Activated naive CD4-positive, alpha-beta T cell treated with anti-CD3 and anti-CD28 coated beads for 36 hours (primary cell): ENCODE measurements at regions of chr17 and their contacts with region 1.

Region 1: GRCh38 chr17:63621766-63622519 is at the start of gene MAP3K3:
- DNase-seq: peak; percentile 99
- H3K4me3 Mint-ChIP-seq: peak within 1 kb of the TSS; percentile 97
- H3K27ac Mint-ChIP-seq: peak within 1 kb of the TSS; percentile 82
- H3K4me1 Mint-ChIP-seq: peaks cover 35% of the 10 kb centered on the region
- H3K27me3 Mint-ChIP-seq: no peaks in the 10 kb centered on the region
- total RNA-seq, gene MAP3K3: 28.8 to 29.6 TPM

Region 2: DNA sequence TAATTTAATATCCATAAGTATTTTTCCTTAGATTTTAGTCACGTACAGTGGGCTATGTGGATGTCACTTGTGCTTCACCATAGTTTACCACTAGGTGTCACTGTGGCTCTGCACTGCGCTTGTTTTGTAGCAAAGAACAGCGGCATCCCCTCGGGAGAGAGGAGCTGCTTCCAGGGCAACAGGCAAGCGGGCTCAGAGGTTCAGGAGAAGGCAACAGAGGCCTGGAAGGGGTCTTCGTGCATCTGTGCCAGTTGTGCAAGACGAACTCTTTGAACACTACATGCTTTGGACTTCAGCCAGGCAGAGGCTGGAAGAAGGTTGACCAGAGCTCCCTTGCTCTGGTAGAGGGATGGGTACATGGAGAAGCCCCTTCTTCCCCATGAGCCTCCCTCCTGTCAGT is 196.5 kb before region 1 on chr17:
- CTCF ChIA-PET with region 1: interaction called, 16 read pairs
- intact Hi-C with region 1: no loop called
- DNase-seq: peak; percentile 85
- H3K4me3 Mint-ChIP-seq: no peak overlapping the region
- H3K27ac Mint-ChIP-seq: no peak overlapping the region
- H3K4me1 Mint-ChIP-seq: peaks cover 21% of the 10 kb centered on the region
- H3K27me3 Mint-ChIP-seq: no peaks in the 10 kb centered on the region

Region 3: DNA sequence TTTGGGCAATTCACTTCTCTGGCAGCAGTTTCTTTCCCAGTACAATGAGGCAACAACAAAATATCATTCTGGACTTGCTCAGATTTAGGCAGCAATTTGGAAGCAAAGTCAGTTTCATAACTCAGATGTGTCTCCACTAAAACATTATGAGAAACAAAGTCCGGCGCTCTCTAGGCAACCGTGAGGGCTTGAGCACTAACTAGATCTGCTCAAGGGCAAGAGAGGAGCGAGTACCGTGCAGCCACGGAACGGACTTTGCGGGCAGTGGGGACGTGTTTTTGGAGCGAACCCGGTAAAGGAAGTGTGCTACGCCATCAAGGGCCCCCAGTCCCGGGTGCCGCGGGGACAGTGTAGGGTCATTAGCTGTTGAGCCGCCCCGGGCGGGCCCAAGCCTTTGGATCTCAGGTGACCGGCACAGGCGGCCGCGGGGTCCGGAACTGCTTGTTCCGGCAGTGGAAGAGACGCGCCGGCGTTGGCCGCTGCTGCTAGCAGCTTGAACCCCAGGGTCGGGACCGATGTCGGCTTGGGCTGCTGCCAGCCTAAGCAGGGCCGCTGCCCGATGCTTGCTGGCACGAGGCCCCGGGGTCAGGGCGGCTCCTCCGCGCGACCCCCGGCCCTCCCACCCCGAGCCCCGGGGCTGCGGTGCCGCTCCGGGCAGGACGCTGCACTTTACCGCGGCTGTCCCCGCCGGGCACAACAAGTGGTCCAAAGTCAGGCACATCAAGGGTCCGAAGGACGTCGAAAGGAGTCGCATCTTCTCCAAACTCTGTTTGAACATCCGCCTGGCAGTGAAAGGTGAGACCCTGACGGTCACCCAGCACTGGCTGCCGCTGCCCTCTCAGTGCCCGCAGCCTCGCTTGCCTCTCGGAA is 21.1 kb before region 1 on chr17 and contains the start of gene TACO1:
- CTCF ChIA-PET with region 1: interaction called, 4 read pairs
- intact Hi-C with region 1: loop called (anchors 1 kb)
- DNase-seq: peak; percentile 88
- H3K4me3 Mint-ChIP-seq: peak within 1 kb of the TSS; percentile 97
- H3K27ac Mint-ChIP-seq: peak within 1 kb of the TSS; percentile 84
- H3K4me1 Mint-ChIP-seq: peaks cover 29% of the 10 kb centered on the region
- H3K27me3 Mint-ChIP-seq: no peaks in the 10 kb centered on the region
- total RNA-seq, gene TACO1: 27.6 to 28.9 TPM

Region 4: GRCh38 chr17:63741221-63742049 is 119.5 kb after region 1 on chr17 and contains the start of gene STRADA:
- CTCF ChIA-PET with region 1: no interaction called
- intact Hi-C with region 1: loop called (anchors 1 kb)
- DNase-seq: peak; percentile 100
- H3K4me3 Mint-ChIP-seq: peak within 1 kb of the TSS; percentile 95
- H3K27ac Mint-ChIP-seq: peak within 1 kb of the TSS; percentile 99
- H3K4me1 Mint-ChIP-seq: peaks cover 20% of the 10 kb centered on the region
- H3K27me3 Mint-ChIP-seq: no peaks in the 10 kb centered on the region
- total RNA-seq, gene STRADA: 73.2 to 76.3 TPM

Region 5: GRCh38 chr17:63827002-63827771 is 205.2 kb after region 1 on chr17 and contains the starts of genes FTSJ3 and PSMC5:
- CTCF ChIA-PET with region 1: no interaction called
- intact Hi-C with region 1: loop called (anchors 1 kb)
- DNase-seq: peak; percentile 97
- H3K4me3 Mint-ChIP-seq: peak within 1 kb of the TSS; percentile 96
- H3K27ac Mint-ChIP-seq: peak within 1 kb of the TSS; percentile 99
- H3K4me1 Mint-ChIP-seq: peaks cover 82% of the 10 kb centered on the region
- H3K27me3 Mint-ChIP-seq: no peaks in the 10 kb centered on the region
- total RNA-seq, gene FTSJ3: 25.3 to 26.2 TPM
- total RNA-seq, gene PSMC5: 144 to 154 TPM